Activated T-helper 1 cell treated with anti-CD3 and anti-CD28 coated beads, Interleukin-12 subunit alpha, Interleukin-12 subunit beta, Interleukin-2, Interleukin-4 antibody, amounts not matched to agents 30 ng/mL and 10 ng/mL and 1 ng/mL, durations not matched to agents 14 hours and 24 hours and 36 hours (primary cell): ENCODE measurements at regions of chr6 and their contacts with region 1.

Region 1: GRCh38 chr6:38493931-38494547 is 145.7 kb downstream of the BTBD9 start:
- DNase-seq: peak; percentile 54
- H3K4me3 Mint-ChIP-seq: no peak overlapping the region
- H3K27ac Mint-ChIP-seq: no peak overlapping the region
- H3K4me1 Mint-ChIP-seq: peaks cover 4% of the 10 kb centered on the region
- H3K27me3 Mint-ChIP-seq: no peaks in the 10 kb centered on the region

Region 2: DNA sequence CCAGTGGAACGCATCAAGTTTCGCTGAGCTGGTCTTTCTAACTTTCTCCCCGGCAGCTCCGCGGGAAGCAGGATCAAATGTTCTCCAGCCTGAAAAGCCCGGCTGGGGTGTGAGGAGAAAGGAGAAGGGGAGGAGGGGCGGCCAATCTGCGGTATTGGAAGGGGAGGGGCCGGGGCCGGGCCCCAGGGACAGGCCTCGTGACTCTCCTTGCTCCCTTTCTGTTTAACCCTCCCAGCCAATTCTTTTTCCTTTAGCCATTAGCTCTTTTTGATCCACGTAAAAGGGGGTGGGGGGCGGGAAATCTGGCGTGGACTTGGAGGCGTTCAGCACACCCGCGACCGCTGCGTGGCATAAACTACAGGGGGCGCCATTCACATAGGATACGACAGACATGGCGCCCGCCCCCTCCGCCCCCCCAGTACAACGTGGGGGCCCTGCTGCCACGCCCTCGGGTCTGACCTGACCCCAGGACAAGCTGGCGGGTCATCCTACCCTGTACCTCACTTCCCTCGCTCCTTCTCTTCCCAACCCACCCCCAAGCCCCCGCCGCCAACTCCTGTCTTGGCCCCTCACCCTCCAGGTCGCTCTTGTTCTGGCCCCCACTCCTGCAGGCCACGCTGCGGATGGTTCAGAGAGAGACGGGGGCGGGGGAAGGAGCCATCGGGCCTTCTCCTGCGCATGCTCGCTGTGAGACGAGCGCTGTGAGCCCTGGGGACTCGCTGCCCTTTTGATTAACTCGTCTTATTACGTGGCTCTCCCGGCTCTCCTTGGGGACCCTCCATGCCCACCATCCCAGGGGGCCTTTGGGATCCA is 788.6 kb before region 1 on chr6:
- intact Hi-C with region 1: loop called (anchors 1 kb)
- DNase-seq: peak; percentile 36
- H3K4me3 Mint-ChIP-seq: peak overlapping the region; percentile 79
- H3K27ac Mint-ChIP-seq: peak overlapping the region; percentile 42
- H3K4me1 Mint-ChIP-seq: peaks cover 6% of the 10 kb centered on the region
- H3K27me3 Mint-ChIP-seq: peaks cover 11% of the 10 kb centered on the region

Region 3: GRCh38 chr6:38018755-38019165 is 475.3 kb before region 1 on chr6:
- intact Hi-C with region 1: loop called (anchors 5 kb)
- DNase-seq: no peak
- H3K4me3 Mint-ChIP-seq: no peak overlapping the region
- H3K27ac Mint-ChIP-seq: no peak overlapping the region
- H3K4me1 Mint-ChIP-seq: peaks cover 6% of the 10 kb centered on the region
- H3K27me3 Mint-ChIP-seq: no peaks in the 10 kb centered on the region

Region 4: DNA sequence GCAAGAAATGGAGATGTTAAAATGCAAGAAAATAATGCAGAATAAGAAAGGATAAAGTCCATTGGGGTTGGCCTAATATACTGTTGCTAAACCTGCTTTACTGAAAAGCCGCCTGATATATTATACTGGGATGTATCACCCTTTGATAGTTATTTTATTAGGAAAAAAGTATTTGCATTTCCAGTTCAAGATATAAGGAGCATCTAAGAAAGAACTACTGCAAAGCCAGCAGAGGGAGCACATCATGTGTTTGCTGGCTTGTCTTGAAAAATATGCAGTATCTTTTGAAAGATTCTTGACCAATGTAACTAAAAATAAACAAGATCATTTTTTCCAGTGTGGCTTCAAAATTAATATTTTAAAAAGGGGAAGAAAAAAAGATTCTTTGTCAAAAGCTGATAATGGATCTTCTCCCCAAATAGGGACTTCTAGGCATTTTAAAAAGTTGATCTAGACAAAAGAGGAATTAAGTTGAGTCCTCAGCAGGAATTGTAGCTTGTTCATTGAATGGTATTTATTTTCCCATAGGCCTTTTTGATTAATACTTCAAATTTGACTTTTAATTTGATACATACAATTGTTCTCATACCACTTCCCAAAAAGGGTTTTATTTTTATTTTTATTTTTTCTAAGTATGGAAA is 459.6 kb before region 1 on chr6:
- intact Hi-C with region 1: loop called (anchors 1 kb)
- DNase-seq: no peak
- H3K4me3 Mint-ChIP-seq: no peak overlapping the region
- H3K27ac Mint-ChIP-seq: no peak overlapping the region
- H3K4me1 Mint-ChIP-seq: peaks cover 34% of the 10 kb centered on the region
- H3K27me3 Mint-ChIP-seq: no peaks in the 10 kb centered on the region